MCF 10A (cell line): ENCODE measurements at regions of chr1 and their contacts with region 1.

Region 1: GRCh38 chr1:230797942-230798418 is 50.8 kb downstream of the CAPN9 start:
- DNase-seq: peak; percentile 83
- H3K4me3 Mint-ChIP-seq: no peak overlapping the region
- H3K27ac Mint-ChIP-seq: no peak overlapping the region
- H3K4me1 Mint-ChIP-seq: no peaks in the 10 kb centered on the region
- H3K27me3 Mint-ChIP-seq: peaks cover 34% of the 10 kb centered on the region
- CTCF ChIP-seq: peak; percentile 70

Region 2: GRCh38 chr1:230867903-230868735 is 70.1 kb after region 1 on chr1 and contains the start of gene C1orf198:
- CTCF ChIA-PET with region 1: interaction called, 10 read pairs
- POLR2A ChIA-PET with region 1: interaction called, 3 read pairs
- intact Hi-C with region 1: loop called (anchors 5 kb)
- DNase-seq: peak; percentile 65
- H3K4me3 Mint-ChIP-seq: peak within 1 kb of the TSS; percentile 79
- H3K27ac Mint-ChIP-seq: peak within 1 kb of the TSS; percentile 69
- H3K4me1 Mint-ChIP-seq: peaks cover 22% of the 10 kb centered on the region
- H3K27me3 Mint-ChIP-seq: no peaks in the 10 kb centered on the region
- CTCF ChIP-seq: no peak
- total RNA-seq, gene C1orf198: 13.7 and 19.2 TPM in 2 replicates

Region 3: GRCh38 chr1:230899841-230900251 is 101.9 kb after region 1 on chr1:
- CTCF ChIA-PET with region 1: interaction called, 16 read pairs
- POLR2A ChIA-PET with region 1: no interaction called
- intact Hi-C with region 1: no loop called
- DNase-seq: no peak
- H3K4me3 Mint-ChIP-seq: no peak overlapping the region
- H3K27ac Mint-ChIP-seq: peak overlapping the region; percentile 1
- H3K4me1 Mint-ChIP-seq: no peaks in the 10 kb centered on the region
- H3K27me3 Mint-ChIP-seq: no peaks in the 10 kb centered on the region
- CTCF ChIP-seq: no peak

Region 4: GRCh38 chr1:230978491-230979388 is 180.8 kb after region 1 on chr1 and contains the starts of genes ARV1 and TTC13:
- CTCF ChIA-PET with region 1: interaction called, 6 read pairs
- POLR2A ChIA-PET with region 1: interaction called, 4 read pairs
- intact Hi-C with region 1: loop called (anchors 2 kb)
- DNase-seq: peak; percentile 100
- H3K4me3 Mint-ChIP-seq: no peak within 1 kb of the TSS
- H3K27ac Mint-ChIP-seq: peak within 1 kb of the TSS; percentile 83
- H3K4me1 Mint-ChIP-seq: peaks cover 7% of the 10 kb centered on the region
- H3K27me3 Mint-ChIP-seq: no peaks in the 10 kb centered on the region
- CTCF ChIP-seq: peak; percentile 15
- total RNA-seq, gene ARV1: 41.8 and 51.8 TPM in 2 replicates
- total RNA-seq, gene TTC13: 29.9 and 35.2 TPM in 2 replicates

Region 5: GRCh38 chr1:231603598-231604275 is 805.8 kb after region 1 on chr1:
- CTCF ChIA-PET with region 1: no interaction called
- POLR2A ChIA-PET with region 1: no interaction called
- intact Hi-C with region 1: loop called (anchors 1 kb)
- DNase-seq: peak; percentile 84
- H3K4me3 Mint-ChIP-seq: peak overlapping the region; percentile 84
- H3K27ac Mint-ChIP-seq: peak overlapping the region; percentile 66
- H3K4me1 Mint-ChIP-seq: peaks cover 12% of the 10 kb centered on the region
- H3K27me3 Mint-ChIP-seq: peaks cover 26% of the 10 kb centered on the region
- CTCF ChIP-seq: peak; percentile 91